ENCODE measurements at regions of chr19 and their contacts with region 1.

Region 1: DNA sequence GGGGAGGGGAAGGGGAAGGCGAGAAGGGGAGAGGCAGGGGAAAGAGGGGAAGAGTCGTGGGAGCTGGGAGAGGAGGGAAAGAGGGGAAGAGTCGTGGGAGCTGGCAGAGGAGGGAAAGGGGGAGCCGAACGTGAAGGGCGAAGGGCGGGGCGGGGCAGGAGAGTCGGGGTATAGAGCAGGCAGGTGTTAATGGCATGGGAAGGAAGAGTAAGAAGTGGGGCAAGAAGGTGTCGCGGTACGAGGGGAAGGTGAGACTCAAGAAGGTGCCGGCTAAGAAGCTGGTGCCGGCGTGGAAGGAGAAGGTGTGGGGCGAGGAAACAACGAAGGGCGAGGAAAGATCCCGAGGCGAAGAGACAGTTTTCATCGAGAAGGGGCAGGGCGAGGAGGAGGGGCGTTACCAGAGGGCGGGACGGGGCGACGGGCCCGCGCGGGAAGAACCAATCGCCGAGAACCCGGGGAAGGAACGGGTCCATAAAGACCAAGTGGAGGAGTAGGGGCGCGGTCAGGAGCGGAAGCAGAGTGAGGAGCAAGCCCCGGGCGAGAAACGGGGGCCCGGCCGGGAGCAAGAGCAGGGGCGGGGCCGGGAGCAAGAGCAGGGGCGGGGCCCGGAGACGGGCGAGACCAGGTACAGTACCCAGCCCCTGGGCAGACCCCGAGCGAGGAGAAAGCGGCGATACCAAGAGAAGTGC is 463 bp downstream of the CATSPERG start:
- DNase-seq: peak; percentile 97
- ATAC-seq: peak; percentile 95

Region 2: GRCh38 chr19:38233740-38234251 is 102.3 kb before region 1 on chr19:
- intact Hi-C with region 1: no loop called
- DNase-seq: peak; percentile 87
- ATAC-seq: peak; percentile 81

Region 3: DNA sequence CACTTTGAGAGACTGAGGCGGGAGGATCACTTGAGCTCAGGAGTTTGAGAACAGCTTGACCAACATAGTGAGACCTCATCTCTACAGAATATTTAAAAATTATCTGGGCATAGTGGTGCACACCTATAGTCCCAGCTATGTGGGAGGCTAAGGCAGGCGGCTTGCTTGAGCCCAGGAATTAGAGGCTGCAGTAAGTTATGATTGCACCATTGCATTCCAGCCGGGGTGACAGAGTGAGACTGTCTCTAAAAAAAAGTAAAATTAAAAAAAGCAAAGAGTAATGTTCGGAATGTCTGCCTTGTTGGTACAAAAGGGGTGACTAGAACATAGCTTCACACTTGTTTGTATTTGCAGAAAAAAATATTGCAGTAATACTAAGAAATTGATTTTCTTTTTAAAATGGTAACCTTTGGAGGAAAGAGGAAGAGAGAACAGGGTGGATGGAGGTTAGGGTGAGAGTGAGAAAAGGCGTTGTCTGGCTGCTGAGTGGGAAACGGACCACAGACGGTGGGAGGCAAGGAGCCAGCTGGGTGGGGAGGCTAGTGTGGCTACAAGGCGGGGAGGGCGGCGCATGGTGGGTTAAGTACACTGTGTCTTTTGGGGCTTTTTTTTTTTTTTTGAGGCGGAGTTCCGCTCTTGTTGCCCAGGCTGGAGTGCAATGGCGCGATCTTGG is 90.1 kb before region 1 on chr19:
- intact Hi-C with region 1: loop called (anchors 2 kb)
- DNase-seq: no peak
- ATAC-seq: peak; percentile 25

Measured in sciatic nerve (tissue), 2 donors.